Activated CD4-positive, alpha-beta T cell treated with anti-CD3 and anti-CD28 coated beads for 36 hours (primary cell): ENCODE measurements at regions of chr19 and their contacts with region 1.

Region 1: DNA sequence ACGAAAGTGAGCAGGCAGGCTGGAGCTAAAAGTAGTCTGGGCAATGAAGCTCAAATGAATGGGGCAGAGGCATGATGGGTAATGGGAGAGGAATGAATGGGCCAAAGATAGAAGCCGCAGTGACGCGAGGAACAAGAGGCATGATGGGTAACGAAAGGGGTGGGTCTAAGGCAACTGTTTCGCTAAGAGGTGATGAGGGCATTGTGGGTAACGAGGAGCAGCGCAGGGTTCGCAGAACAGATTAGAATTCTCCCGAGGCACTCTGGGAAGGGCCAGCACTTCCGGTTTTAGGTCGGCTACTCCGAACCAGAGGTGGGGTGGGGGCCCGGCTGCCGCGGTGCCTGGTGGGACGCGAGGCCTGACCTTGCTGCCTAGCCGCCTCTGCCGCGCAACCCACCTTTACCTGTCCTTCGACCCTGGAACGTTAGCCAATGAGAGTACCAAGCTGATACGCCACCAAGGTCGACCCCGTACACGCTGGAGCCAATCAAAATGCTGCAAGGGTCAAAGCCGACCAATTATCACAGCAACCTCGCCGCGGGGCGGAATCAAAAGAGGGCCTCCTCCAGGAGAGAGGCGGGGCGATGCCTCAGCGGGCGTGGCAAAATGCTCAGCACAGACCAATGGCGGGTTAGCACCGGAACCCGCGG is 563 bp upstream of the TOMM40 start:
- DNase-seq: no peak
- ATAC-seq: peak; percentile 84
- H3K4me3 Mint-ChIP-seq: peak overlapping the region; percentile 74
- H3K27ac Mint-ChIP-seq: peak overlapping the region; percentile 96
- H3K4me1 Mint-ChIP-seq: peaks cover 29% of the 10 kb centered on the region
- H3K27me3 Mint-ChIP-seq: no peaks in the 10 kb centered on the region

Region 2: DNA sequence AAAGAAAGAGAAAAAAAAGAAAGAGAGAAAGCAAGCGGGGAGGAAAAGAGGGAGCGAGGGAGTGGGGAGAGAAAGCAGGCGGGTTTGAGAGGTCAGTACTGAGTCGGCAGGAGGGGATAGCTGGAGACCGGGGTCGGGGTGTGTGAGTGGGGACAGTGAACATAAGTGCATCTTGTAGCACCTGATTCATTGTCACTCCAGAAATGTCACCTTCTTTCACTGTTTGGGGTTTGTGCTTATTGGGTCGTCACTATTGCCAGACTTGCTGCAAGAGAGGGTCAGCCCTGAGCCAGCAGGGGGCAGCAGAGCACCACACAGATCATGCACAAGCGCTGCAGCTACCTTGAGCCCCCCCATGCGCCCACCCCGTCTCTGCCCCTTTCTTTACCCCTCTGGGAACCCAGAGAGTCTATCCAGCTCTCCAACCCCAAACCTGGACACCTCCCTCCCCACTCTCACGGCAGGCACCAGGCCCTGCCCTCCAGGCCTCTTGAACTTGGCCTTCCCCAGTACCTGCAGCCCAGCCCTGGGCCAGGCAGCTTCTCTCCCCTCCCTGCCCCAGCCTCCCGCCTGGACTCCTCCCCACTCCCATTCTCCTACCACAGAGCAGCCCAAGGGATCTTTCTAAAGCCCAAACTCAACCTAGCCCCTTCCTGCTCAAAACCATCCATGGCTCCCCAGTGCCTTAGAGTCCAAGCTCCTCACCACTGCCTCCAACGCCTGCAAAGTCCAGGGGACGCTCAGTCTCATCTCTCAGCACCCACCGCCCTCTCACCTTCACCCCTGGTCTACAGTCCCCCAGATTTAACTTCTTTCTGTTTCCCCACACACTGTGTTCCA is 201.2 kb before region 1 on chr19:
- CTCF ChIA-PET with region 1: no interaction called
- POLR2A ChIA-PET with region 1: no interaction called
- intact Hi-C with region 1: loop called in 1 of 2 experiments (anchors 2 kb)
- DNase-seq: peak; percentile 90
- ATAC-seq: peak; percentile 39
- H3K4me3 Mint-ChIP-seq: no peak overlapping the region
- H3K27ac Mint-ChIP-seq: no peak overlapping the region
- H3K4me1 Mint-ChIP-seq: peaks cover 42% of the 10 kb centered on the region
- H3K27me3 Mint-ChIP-seq: peaks cover 17% of the 10 kb centered on the region

Region 3: GRCh38 chr19:44710483-44710882 is 180.0 kb before region 1 on chr19:
- CTCF ChIA-PET with region 1: no interaction called
- POLR2A ChIA-PET with region 1: no interaction called
- intact Hi-C with region 1: no loop called
- DNase-seq: no peak
- ATAC-seq: no peak
- H3K4me3 Mint-ChIP-seq: no peak overlapping the region
- H3K27ac Mint-ChIP-seq: no peak overlapping the region
- H3K4me1 Mint-ChIP-seq: no peaks in the 10 kb centered on the region
- H3K27me3 Mint-ChIP-seq: no peaks in the 10 kb centered on the region

Region 4: DNA sequence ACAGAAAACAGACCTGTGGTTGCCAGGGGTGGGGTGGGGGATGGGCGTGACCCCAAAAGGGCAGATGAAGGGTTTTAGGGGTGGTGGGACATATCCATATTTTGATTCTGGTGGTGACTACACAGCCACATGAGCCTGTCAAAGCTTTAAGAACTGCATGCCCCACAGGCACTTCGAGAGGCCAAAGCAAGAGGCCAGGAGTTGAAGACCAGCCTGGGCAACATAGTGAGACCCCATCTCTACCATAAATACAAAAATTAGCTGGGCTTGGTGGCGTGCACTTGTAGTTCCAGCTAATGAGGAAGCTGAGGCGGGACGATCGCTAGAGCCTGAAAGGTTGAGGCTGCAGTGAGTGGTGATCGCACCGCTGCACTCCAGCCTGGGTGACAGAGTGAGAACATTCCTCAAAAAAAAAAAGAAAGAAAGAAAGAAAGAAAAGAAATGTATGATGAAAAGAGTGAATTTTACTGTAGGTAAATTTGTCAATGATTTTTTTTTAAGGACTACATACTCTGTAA is 160.9 kb before region 1 on chr19:
- CTCF ChIA-PET with region 1: no interaction called
- POLR2A ChIA-PET with region 1: no interaction called
- intact Hi-C with region 1: no loop called
- DNase-seq: no peak
- ATAC-seq: no peak
- H3K4me3 Mint-ChIP-seq: no peak overlapping the region
- H3K27ac Mint-ChIP-seq: no peak overlapping the region
- H3K4me1 Mint-ChIP-seq: peaks cover 7% of the 10 kb centered on the region
- H3K27me3 Mint-ChIP-seq: no peaks in the 10 kb centered on the region

Region 5: GRCh38 chr19:44800461-44800860 is 90.0 kb before region 1 on chr19:
- CTCF ChIA-PET with region 1: no interaction called
- POLR2A ChIA-PET with region 1: no interaction called
- intact Hi-C with region 1: no loop called
- DNase-seq: peak; percentile 92
- ATAC-seq: peak; percentile 98
- H3K4me3 Mint-ChIP-seq: no peak overlapping the region
- H3K27ac Mint-ChIP-seq: no peak overlapping the region
- H3K4me1 Mint-ChIP-seq: peaks cover 11% of the 10 kb centered on the region
- H3K27me3 Mint-ChIP-seq: no peaks in the 10 kb centered on the region

Region 6: DNA sequence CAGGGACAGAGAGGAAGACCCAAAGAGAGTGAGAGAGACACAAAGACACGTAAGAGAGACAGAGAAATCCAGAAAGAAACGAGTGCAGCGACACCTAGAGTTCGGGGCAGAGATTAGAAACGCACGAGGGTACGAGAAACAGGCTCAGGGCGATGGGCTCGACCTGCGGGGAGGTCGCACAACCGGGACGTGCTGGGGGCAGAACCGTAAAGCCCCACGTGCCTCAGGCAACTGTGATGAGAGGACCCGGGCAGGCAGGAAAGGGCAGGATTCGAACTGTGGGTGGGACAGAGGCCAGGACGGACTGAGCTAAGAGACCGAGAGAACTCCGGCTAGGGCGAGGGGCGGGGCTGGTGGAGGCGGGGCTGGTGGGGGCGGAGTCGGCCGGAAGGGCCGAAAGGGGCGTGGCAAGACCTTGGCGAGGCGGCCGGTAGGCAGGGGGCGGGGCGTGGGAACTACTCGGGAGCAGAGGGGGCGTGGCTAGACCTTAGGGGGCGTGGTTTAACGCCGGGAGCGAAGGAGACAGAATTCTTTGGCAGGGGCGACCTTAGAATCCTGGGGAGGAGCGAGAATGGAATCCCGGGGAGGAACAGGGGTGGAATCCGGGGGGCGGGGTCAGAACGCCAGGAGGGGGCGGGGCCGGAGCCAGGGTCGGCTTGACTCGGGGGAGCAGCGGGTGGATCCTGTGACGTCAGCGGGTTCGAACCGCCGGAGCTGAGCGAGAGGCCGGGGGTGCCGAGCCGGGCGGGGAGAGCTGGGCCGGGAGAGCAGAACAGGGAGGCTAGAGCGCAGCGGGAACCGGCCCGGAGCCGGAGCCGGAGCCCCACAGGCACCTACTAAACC is 44.7 kb before region 1 on chr19 and contains the start of gene NECTIN2:
- CTCF ChIA-PET with region 1: no interaction called
- POLR2A ChIA-PET with region 1: no interaction called
- intact Hi-C with region 1: loop called in 1 of 2 experiments (anchors 1 kb)
- DNase-seq: peak; percentile 98
- ATAC-seq: peak; percentile 77
- H3K4me3 Mint-ChIP-seq: peak within 1 kb of the TSS; percentile 73
- H3K27ac Mint-ChIP-seq: peak within 1 kb of the TSS; percentile 10
- H3K4me1 Mint-ChIP-seq: peaks cover 21% of the 10 kb centered on the region
- H3K27me3 Mint-ChIP-seq: peaks cover 21% of the 10 kb centered on the region
- total RNA-seq, gene NECTIN2: 0.80 to 0.93 TPM

Region 7: GRCh38 chr19:44943801-44944249 is 53.3 kb after region 1 on chr19:
- CTCF ChIA-PET with region 1: no interaction called
- POLR2A ChIA-PET with region 1: no interaction called
- intact Hi-C with region 1: no loop called
- DNase-seq: no peak
- ATAC-seq: no peak
- H3K4me3 Mint-ChIP-seq: no peak overlapping the region
- H3K27ac Mint-ChIP-seq: no peak overlapping the region
- H3K4me1 Mint-ChIP-seq: no peaks in the 10 kb centered on the region
- H3K27me3 Mint-ChIP-seq: no peaks in the 10 kb centered on the region

Region 8: DNA sequence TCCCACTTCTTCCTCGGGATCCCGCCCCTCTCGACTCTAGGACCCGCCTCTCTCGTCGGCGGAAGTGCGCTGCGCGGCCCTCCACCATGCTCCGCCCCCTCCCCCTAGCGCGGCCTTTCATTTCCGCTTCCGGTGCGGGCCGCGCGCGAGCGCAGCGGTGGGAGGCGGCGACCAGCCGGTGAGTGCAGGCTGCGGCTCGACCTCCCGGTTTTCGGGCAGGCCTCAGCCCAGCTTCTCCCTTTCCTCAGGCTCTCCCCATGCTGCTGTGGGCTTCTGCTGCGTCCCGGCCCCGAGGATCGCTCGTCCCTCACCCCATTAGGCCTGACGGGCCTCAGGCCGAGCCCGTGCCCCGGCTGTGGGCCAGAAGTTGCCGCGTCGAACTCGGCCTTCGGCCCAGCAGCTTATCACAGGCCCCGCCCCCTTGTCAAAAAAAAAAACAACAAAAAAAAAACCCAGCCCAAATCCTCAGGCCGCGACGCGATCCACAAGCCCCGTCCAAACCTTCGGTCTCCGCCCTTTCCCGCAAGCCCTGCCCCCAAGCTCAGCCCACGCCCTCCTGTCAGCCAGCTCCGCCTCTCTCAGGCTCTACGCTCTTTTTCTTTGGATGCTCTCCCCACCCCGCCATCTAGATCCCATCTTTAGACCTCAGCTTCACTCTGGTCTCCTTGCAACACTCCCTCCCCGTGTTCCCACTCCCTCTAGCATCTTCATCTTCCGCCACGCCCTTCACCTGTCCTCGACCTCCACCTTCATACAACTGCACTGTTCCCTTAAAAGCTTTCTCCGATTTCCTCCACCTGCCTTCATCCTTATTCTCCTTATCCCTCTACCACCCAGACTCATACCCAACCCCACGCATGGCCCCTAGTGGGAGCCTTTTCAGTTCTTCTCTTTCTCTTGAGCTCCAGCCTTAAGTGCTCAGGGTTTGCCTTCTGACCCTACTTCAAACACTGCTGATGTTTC is 148.7 kb after region 1 on chr19 and contains the start of gene CLASRP:
- CTCF ChIA-PET with region 1: no interaction called
- POLR2A ChIA-PET with region 1: interaction called, 4 read pairs
- intact Hi-C with region 1: loop called (anchors 1 kb)
- DNase-seq: peak; percentile 94
- ATAC-seq: peak; percentile 96
- H3K4me3 Mint-ChIP-seq: peak within 1 kb of the TSS; percentile 97
- H3K27ac Mint-ChIP-seq: peak within 1 kb of the TSS; percentile 96
- H3K4me1 Mint-ChIP-seq: peaks cover 32% of the 10 kb centered on the region
- H3K27me3 Mint-ChIP-seq: no peaks in the 10 kb centered on the region
- total RNA-seq, gene CLASRP: 101 to 103 TPM

Region 9: GRCh38 chr19:45117669-45118068 is 227.2 kb after region 1 on chr19:
- CTCF ChIA-PET with region 1: no interaction called
- POLR2A ChIA-PET with region 1: no interaction called
- intact Hi-C with region 1: loop called in 1 of 2 experiments (anchors 1 kb)
- DNase-seq: peak; percentile 49
- ATAC-seq: peak; percentile 18
- H3K4me3 Mint-ChIP-seq: no peak overlapping the region
- H3K27ac Mint-ChIP-seq: no peak overlapping the region
- H3K4me1 Mint-ChIP-seq: peaks cover 69% of the 10 kb centered on the region
- H3K27me3 Mint-ChIP-seq: no peaks in the 10 kb centered on the region

Region 10: GRCh38 chr19:45886427-45887199 is 996.1 kb after region 1 on chr19:
- CTCF ChIA-PET with region 1: no interaction called
- POLR2A ChIA-PET with region 1: no interaction called
- intact Hi-C with region 1: loop called in 1 of 2 experiments (anchors 2 kb)
- DNase-seq: peak; percentile 96
- ATAC-seq: peak; percentile 85
- H3K4me3 Mint-ChIP-seq: peak overlapping the region; percentile 85
- H3K27ac Mint-ChIP-seq: peak overlapping the region; percentile 95
- H3K4me1 Mint-ChIP-seq: peaks cover 17% of the 10 kb centered on the region
- H3K27me3 Mint-ChIP-seq: no peaks in the 10 kb centered on the region